Head of caudate nucleus (tissue), 42 donors: ENCODE measurements at regions of chr6 and their contacts with region 1.

Region 1: GRCh38 chr6:132483779-132484679 is 28.9 kb downstream of the STX7 start:
- DNase-seq: peak in 21 of 42 donors; percentile 2 to 83 (median 57)

Region 2: GRCh38 chr6:132279592-132280139 is 204.4 kb before region 1 on chr6:
- intact Hi-C with region 1: loop called (anchors 10 kb)
- DNase-seq: peak; percentile 66 to 93 (median 85)

Region 3: GRCh38 chr6:132300323-132300949 is 183.6 kb before region 1 on chr6:
- intact Hi-C with region 1: loop called (anchors 5 kb)
- DNase-seq: peak in 37 of 42 donors; percentile 6 to 79 (median 50)

Region 4: GRCh38 chr6:132430110-132430509 is 53.9 kb before region 1 on chr6:
- intact Hi-C with region 1: no loop called
- DNase-seq: no peak